CD8-positive, alpha-beta memory T cell (primary cell): ENCODE measurements at regions of chr17 and their contacts with region 1.

Region 1: GRCh38 chr17:40548982-40549685 is 16.1 kb downstream of the CCR7 start:
- DNase-seq: peak in 1 of 5 donors; percentile 36
- H3K4me3 ChIP-seq: no peak overlapping the region
- H3K4me3 Mint-ChIP-seq: peak overlapping the region in 5 of 7 donors; percentile 10 to 53 (median 29)
- H3K27ac ChIP-seq: no peak overlapping the region
- H3K27ac Mint-ChIP-seq: peak overlapping the region; percentile 47 to 95 (median 78)
- H3K4me1 ChIP-seq: peaks cover 92% of the 10 kb centered on the region
- H3K4me1 Mint-ChIP-seq: peaks cover 81 to 93% (median 90%) of the 10 kb centered on the region in 3 donors
- H3K27me3 ChIP-seq: no peaks in the 10 kb centered on the region
- H3K27me3 Mint-ChIP-seq: no peaks in the 10 kb centered on the region

Region 2: GRCh38 chr17:40480501-40481003 is 68.6 kb before region 1 on chr17:
- CTCF ChIA-PET with region 1: interaction called, 4 read pairs
- POLR2A ChIA-PET with region 1: interaction called, 12 read pairs
- DNase-seq: peak; percentile 76 to 96 (median 91)
- H3K4me3 ChIP-seq: no peak overlapping the region
- H3K4me3 Mint-ChIP-seq: peak overlapping the region; percentile 45 to 85 (median 62)
- H3K27ac ChIP-seq: peak overlapping the region; percentile 67
- H3K27ac Mint-ChIP-seq: peak overlapping the region; percentile 89 to 100 (median 99)
- H3K4me1 ChIP-seq: peaks cover 61% of the 10 kb centered on the region
- H3K4me1 Mint-ChIP-seq: peaks cover 64 to 86% (median 82%) of the 10 kb centered on the region in 3 donors
- H3K27me3 ChIP-seq: no peaks in the 10 kb centered on the region
- H3K27me3 Mint-ChIP-seq: peaks cover 0 to 1% of the 10 kb centered on the region in 2 donors

Region 3: DNA sequence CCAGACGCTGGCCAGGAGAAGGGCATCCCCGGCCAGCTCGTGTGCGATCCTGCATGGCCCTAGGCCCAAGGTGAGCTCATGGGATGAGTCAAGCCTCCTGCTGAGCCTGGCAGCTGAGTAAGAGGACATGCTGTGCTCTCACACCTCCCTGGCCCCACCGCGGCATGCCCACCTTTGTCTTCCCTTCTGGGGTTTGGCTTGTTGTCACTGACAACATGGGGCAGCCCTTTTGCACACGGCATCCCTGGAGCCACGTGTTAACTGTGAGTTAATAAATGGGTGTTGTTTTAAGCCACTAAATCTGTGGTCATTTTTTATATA is 38.8 kb before region 1 on chr17:
- CTCF ChIA-PET with region 1: no interaction called
- POLR2A ChIA-PET with region 1: no interaction called
- DNase-seq: no peak
- H3K4me3 ChIP-seq: no peak overlapping the region
- H3K4me3 Mint-ChIP-seq: no peak overlapping the region
- H3K27ac ChIP-seq: no peak overlapping the region
- H3K27ac Mint-ChIP-seq: no peak overlapping the region
- H3K4me1 ChIP-seq: peaks cover 21% of the 10 kb centered on the region
- H3K4me1 Mint-ChIP-seq: peaks cover 19 to 34% (median 24%) of the 10 kb centered on the region in 3 donors
- H3K27me3 ChIP-seq: no peaks in the 10 kb centered on the region
- H3K27me3 Mint-ChIP-seq: no peaks in the 10 kb centered on the region

Region 4: DNA sequence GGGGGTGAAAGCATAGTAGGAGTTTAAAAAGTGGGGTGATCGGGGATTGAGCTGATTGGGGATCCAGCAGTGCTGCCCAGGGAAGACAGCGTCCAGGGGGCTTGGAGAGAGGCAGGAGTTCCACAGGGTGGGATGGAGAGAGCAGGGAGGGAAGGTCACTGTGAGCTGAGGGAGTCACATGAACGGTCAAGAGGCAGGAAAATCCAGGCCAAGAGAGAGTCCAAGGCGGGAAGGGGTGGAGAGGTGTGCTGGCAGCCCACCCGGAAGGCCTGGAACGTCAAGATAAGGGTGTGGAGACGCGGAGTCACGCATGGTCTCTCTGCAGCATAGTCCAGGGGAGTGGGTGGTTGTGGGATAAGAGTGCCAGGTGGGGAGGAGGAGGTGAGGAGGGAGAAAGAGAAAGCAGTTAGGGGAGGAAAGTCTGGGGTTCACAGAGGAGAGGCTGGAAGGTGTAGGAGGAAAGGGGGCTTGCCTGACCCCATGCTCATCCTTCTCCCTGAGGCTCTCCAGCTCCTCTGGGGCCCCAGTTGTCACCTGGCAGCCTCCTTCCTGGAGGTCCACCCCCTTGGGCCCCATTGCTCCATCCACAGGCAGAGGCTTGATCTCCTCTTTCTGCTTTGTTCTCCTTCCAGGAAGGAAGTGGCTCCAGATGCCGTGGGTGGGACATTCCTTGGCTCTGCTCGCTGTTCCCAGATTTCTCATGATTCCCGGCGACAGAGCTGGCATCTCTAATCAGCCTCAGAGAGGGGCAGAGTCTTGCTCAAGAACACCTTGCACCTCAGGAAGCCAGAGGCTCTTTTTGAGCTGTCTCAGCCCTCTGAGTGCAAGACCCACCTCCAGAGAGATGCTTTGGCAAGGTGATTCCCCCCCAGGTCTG is 12.6 kb before region 1 on chr17:
- CTCF ChIA-PET with region 1: interaction called, 475 read pairs
- POLR2A ChIA-PET with region 1: interaction called, 25 read pairs
- DNase-seq: peak in 1 of 5 donors; percentile 26
- H3K4me3 ChIP-seq: no peak overlapping the region
- H3K4me3 Mint-ChIP-seq: peak overlapping the region in 2 of 7 donors; percentile 32 to 42
- H3K27ac ChIP-seq: peak overlapping the region; percentile 12
- H3K27ac Mint-ChIP-seq: peak overlapping the region; percentile 56 to 99 (median 93)
- H3K4me1 ChIP-seq: peaks cover 95% of the 10 kb centered on the region
- H3K4me1 Mint-ChIP-seq: peaks cover 88 to 98% (median 89%) of the 10 kb centered on the region in 3 donors
- H3K27me3 ChIP-seq: no peaks in the 10 kb centered on the region
- H3K27me3 Mint-ChIP-seq: peaks cover 0 to 9% of the 10 kb centered on the region in 2 donors

Region 5: DNA sequence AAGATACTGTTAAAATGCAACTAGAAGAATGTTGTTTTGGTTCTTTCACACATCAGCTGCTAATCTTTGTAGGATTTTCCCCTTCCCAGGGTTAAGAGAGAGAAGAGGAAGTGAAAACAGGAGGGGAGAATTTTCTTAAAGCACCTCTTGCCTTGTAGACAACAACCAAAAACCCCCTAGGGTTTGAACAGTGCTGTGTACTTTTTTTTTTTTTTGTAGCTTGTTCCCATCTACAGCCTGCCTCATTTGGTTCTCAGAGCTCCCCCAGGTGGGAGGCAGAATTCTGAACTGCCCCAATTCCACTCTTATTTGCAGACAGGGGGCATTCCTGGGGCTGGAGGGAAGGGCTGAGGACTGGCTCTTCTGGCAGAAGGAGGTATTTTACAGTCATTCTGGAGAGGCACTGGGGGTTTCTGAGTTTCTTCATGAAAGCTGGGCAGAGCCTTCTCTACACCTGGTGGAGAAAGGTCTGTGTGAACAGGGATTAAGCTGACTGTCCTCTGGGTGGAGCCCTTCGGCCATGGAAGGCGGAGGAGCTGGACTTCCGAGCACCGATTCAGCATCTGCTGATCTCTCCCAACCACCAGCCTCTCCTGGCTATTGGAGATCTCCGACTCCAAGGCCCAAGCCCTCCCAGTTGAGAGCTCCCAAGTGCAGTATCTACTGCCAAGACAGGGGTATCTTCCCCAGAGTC is 66.3 kb after region 1 on chr17:
- CTCF ChIA-PET with region 1: interaction called, 15 read pairs
- POLR2A ChIA-PET with region 1: interaction called, 4 read pairs
- DNase-seq: peak in 3 of 5 donors; percentile 41 to 79 (median 57)
- H3K4me3 ChIP-seq: peak overlapping the region; percentile 25
- H3K4me3 Mint-ChIP-seq: peak overlapping the region in 5 of 7 donors; percentile 33 to 66 (median 49)
- H3K27ac ChIP-seq: no peak overlapping the region
- H3K27ac Mint-ChIP-seq: peak overlapping the region in 7 of 8 donors; percentile 26 to 93 (median 88)
- H3K4me1 ChIP-seq: peaks cover 74% of the 10 kb centered on the region
- H3K4me1 Mint-ChIP-seq: peaks cover 39 to 74% (median 68%) of the 10 kb centered on the region in 3 donors
- H3K27me3 ChIP-seq: peaks cover 2% of the 10 kb centered on the region
- H3K27me3 Mint-ChIP-seq: peaks cover 0 to 2% of the 10 kb centered on the region in 2 donors

Region 6: GRCh38 chr17:41013606-41014005 is 464.5 kb after region 1 on chr17:
- CTCF ChIA-PET with region 1: no interaction called
- POLR2A ChIA-PET with region 1: no interaction called
- DNase-seq: no peak
- H3K4me3 ChIP-seq: no peak overlapping the region
- H3K4me3 Mint-ChIP-seq: no peak overlapping the region
- H3K27ac ChIP-seq: no peak overlapping the region
- H3K27ac Mint-ChIP-seq: no peak overlapping the region
- H3K4me1 ChIP-seq: no peaks in the 10 kb centered on the region
- H3K4me1 Mint-ChIP-seq: no peaks in the 10 kb centered on the region
- H3K27me3 ChIP-seq: peaks cover 4% of the 10 kb centered on the region
- H3K27me3 Mint-ChIP-seq: peaks cover 2 to 18% of the 10 kb centered on the region in 2 donors